K562 (cell line): ENCODE measurements at regions of chr22 and their contacts with region 1.

Region 1: GRCh38 chr22:46122511-46122971 is 27.8 kb upstream of the PPARA start:
- DNase-seq: peak; percentile 80 to 86 (median 82)
- ATAC-seq: peak; percentile 90
- H3K4me3 ChIP-seq: no peak overlapping the region
- H3K27ac ChIP-seq: no peak overlapping the region
- H3K4me1 ChIP-seq: peaks cover 0 to 56% of the 10 kb centered on the region in 2 experiments; a peak in 3 of 5 replicates
- H3K27me3 ChIP-seq: no peaks in the 10 kb centered on the region
- CTCF ChIP-seq: peak; percentile 81 to 84 (median 83)
- EP300 ChIP-seq: no peak
- POLR2A ChIP-seq: no peak
- RAD21 ChIP-seq: peak; percentile 68 to 90

Region 2: GRCh38 chr22:46309526-46310085 is 187.1 kb after region 1 on chr22:
- CTCF ChIA-PET with region 1: interaction called, 40 read pairs
- POLR2A ChIA-PET with region 1: no interaction called
- in situ Hi-C with region 1: loop called (anchors 5 kb)
- intact Hi-C with region 1: loop called (anchors 1 kb)
- DNase-seq: no peak
- ATAC-seq: no peak
- H3K4me3 ChIP-seq: no peak overlapping the region
- H3K27ac ChIP-seq: no peak overlapping the region
- H3K4me1 ChIP-seq: peaks cover 7 to 8% of the 10 kb centered on the region in 2 experiments; a peak in 3 of 5 replicates
- H3K27me3 ChIP-seq: no peaks in the 10 kb centered on the region
- CTCF ChIP-seq: no peak
- EP300 ChIP-seq: no peak
- POLR2A ChIP-seq: no peak
- RAD21 ChIP-seq: no peak

Region 3: DNA sequence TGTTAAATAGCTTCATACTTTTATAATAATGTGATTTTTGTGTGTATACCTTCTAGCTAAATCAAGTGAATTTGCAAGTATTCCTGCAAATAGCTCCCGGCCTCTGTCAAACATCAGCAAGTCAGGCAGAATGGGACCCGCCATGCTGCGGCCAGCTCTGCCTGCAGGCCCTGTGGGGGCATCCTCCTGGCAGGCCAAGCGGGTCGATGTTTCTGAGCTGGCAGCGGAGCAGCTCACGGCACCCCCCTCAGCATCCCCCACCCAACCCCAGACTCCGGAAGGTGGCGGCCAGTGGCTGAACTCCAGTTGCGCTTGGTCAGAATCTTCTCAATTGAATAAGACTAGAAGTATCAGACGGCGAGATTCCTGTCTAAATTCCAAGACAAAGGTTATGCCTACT is 193.4 kb after region 1 on chr22:
- CTCF ChIA-PET with region 1: interaction called, 40 read pairs
- POLR2A ChIA-PET with region 1: no interaction called
- in situ Hi-C with region 1: loop called (anchors 5 kb)
- intact Hi-C with region 1: loop called (anchors 1 kb)
- DNase-seq: no peak
- ATAC-seq: no peak
- H3K4me3 ChIP-seq: no peak overlapping the region
- H3K27ac ChIP-seq: no peak overlapping the region
- H3K4me1 ChIP-seq: peaks cover 0 to 3% of the 10 kb centered on the region in 2 experiments; a peak in 1 of 5 replicates
- H3K27me3 ChIP-seq: no peaks in the 10 kb centered on the region
- CTCF ChIP-seq: no peak
- EP300 ChIP-seq: no peak
- POLR2A ChIP-seq: no peak
- RAD21 ChIP-seq: no peak

Region 4: GRCh38 chr22:46542011-46542985 is 419.8 kb after region 1 on chr22:
- CTCF ChIA-PET with region 1: no interaction called
- POLR2A ChIA-PET with region 1: no interaction called
- in situ Hi-C with region 1: loop called (anchors 10 kb)
- intact Hi-C with region 1: loop called (anchors 5 kb)
- DNase-seq: peak; percentile 52 to 77 (median 73)
- ATAC-seq: peak; percentile 99
- H3K4me3 ChIP-seq: no peak overlapping the region
- H3K27ac ChIP-seq: no peak overlapping the region
- H3K4me1 ChIP-seq: peaks cover 0 to 14% of the 10 kb centered on the region in 2 experiments; a peak in 2 of 5 replicates
- H3K27me3 ChIP-seq: peaks cover 6 to 35% of the 10 kb centered on the region in 2 experiments; a peak in 3 of 5 replicates
- CTCF ChIP-seq: peak; percentile 80 to 83 (median 82)
- EP300 ChIP-seq: no peak
- POLR2A ChIP-seq: no peak
- RAD21 ChIP-seq: peak; percentile 48 to 83